ENCODE measurements at regions of chr1 and their contacts with region 1.

Region 1: GRCh38 chr1:233140974-233141373 is 154.6 kb downstream of the PCNX2 start:
- DNase-seq: no peak
- ATAC-seq: peak in 2 of 4 donors; percentile 48 to 69
- H3K4me3 ChIP-seq: no peak overlapping the region
- H3K27ac ChIP-seq: no peak overlapping the region
- H3K4me1 ChIP-seq: peaks cover 0 to 12% (median 0%) of the 10 kb centered on the region in 12 donors
- H3K27me3 ChIP-seq: no peaks in the 10 kb centered on the region
- CTCF ChIP-seq: no peak
- POLR2A ChIP-seq: no peak

Region 2: GRCh38 chr1:233081733-233082132 is 59.2 kb before region 1 on chr1:
- intact Hi-C with region 1: no loop called
- DNase-seq: no peak
- ATAC-seq: peak in 1 of 4 donors; percentile 18
- H3K4me3 ChIP-seq: no peak overlapping the region
- H3K27ac ChIP-seq: peak overlapping the region in 1 of 12 donors; percentile 2
- H3K4me1 ChIP-seq: peaks cover 0 to 13% (median 0%) of the 10 kb centered on the region in 12 donors
- H3K27me3 ChIP-seq: no peaks in the 10 kb centered on the region
- CTCF ChIP-seq: no peak
- POLR2A ChIP-seq: no peak

Region 3: DNA sequence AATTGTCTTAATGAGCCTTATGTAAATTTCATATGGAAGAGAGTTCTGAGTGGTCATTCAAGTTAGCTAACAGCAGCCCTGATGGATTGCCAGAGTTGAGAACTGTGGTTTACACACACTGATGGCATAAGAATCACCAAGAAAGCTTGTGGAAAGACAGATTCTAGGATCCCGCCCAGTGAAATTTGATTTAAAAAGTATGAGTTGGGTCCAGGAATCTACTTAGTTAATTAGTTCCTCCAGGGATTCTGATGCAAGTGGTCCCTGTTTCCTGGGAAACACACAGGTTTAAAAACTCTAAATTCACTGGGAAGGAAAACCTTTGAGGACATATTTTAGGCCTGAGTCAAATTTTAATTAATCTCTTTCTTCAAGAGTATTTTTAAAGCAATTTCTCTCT is 46.3 kb before region 1 on chr1:
- intact Hi-C with region 1: loop called in 1 of 10 experiments (anchors 5 kb)
- DNase-seq: no peak
- ATAC-seq: no peak
- H3K4me3 ChIP-seq: no peak overlapping the region
- H3K27ac ChIP-seq: peak overlapping the region in 6 of 12 donors; percentile 8 to 67 (median 23)
- H3K4me1 ChIP-seq: peaks cover 0 to 33% (median 8%) of the 10 kb centered on the region in 12 donors
- H3K27me3 ChIP-seq: no peaks in the 10 kb centered on the region
- CTCF ChIP-seq: no peak
- POLR2A ChIP-seq: no peak

Region 4: GRCh38 chr1:233240829-233241682 is 100.1 kb after region 1 on chr1:
- intact Hi-C with region 1: no loop called
- DNase-seq: peak; percentile 56 to 72 (median 62)
- ATAC-seq: peak; percentile 83 to 94 (median 92)
- H3K4me3 ChIP-seq: peak overlapping the region in 7 of 12 donors; percentile 8 to 17 (median 11)
- H3K27ac ChIP-seq: no peak overlapping the region
- H3K4me1 ChIP-seq: peaks cover 0 to 25% (median 6%) of the 10 kb centered on the region in 12 donors
- H3K27me3 ChIP-seq: no peaks in the 10 kb centered on the region
- CTCF ChIP-seq: peak; percentile 67 to 91 (median 82)
- POLR2A ChIP-seq: no peak

Region 5: GRCh38 chr1:233656032-233656620 is 515.2 kb after region 1 on chr1:
- intact Hi-C with region 1: no loop called
- DNase-seq: no peak
- ATAC-seq: no peak
- H3K4me3 ChIP-seq: no peak overlapping the region
- H3K27ac ChIP-seq: no peak overlapping the region
- H3K4me1 ChIP-seq: no peaks in the 10 kb centered on the region
- H3K27me3 ChIP-seq: no peaks in the 10 kb centered on the region
- CTCF ChIP-seq: no peak
- POLR2A ChIP-seq: no peak

Measured in heart left ventricle (tissue), 16 donors.